Gastrocnemius medialis (tissue), 4 donors: ENCODE measurements at regions of chr19 and their contacts with region 1.

Region 1: GRCh38 chr19:49937750-49938381 is 8.6 kb upstream of the NUP62 start:
- DNase-seq: peak; percentile 50 to 55
- ATAC-seq: peak; percentile 81 to 84
- H3K4me3 ChIP-seq: peak overlapping the region in 3 of 4 donors; percentile 3 to 23 (median 19)
- H3K27ac ChIP-seq: no peak overlapping the region
- H3K4me1 ChIP-seq: peaks cover 3 to 6% of the 10 kb centered on the region in 2 donors
- H3K27me3 ChIP-seq: no peaks in the 10 kb centered on the region
- CTCF ChIP-seq: peak; percentile 88 to 99 (median 94)
- POLR2A ChIP-seq: no peak

Region 2: GRCh38 chr19:49983645-49984229 is 45.9 kb after region 1 on chr19:
- in situ Hi-C with region 1: no loop called
- intact Hi-C with region 1: loop called (anchors 1 kb)
- DNase-seq: peak in 1 of 2 donors; percentile 33
- ATAC-seq: peak in 1 of 2 donors; percentile 72
- H3K4me3 ChIP-seq: no peak overlapping the region
- H3K27ac ChIP-seq: no peak overlapping the region
- H3K4me1 ChIP-seq: no peaks in the 10 kb centered on the region
- H3K27me3 ChIP-seq: no peaks in the 10 kb centered on the region
- CTCF ChIP-seq: peak; percentile 50 to 83 (median 73)
- POLR2A ChIP-seq: no peak